Activated CD4-positive, alpha-beta T cell treated with anti-CD3 and anti-CD28 coated beads for 36 hours (primary cell): ENCODE measurements at regions of chr1 and their contacts with region 1.

Region 1: GRCh38 chr1:205227584-205228006 is at the start of gene TMCC2:
- DNase-seq: peak; percentile 92
- ATAC-seq: peak; percentile 81
- H3K4me3 Mint-ChIP-seq: peak within 1 kb of the TSS; percentile 89
- H3K27ac Mint-ChIP-seq: peak within 1 kb of the TSS; percentile 95
- H3K4me1 Mint-ChIP-seq: peaks cover 38% of the 10 kb centered on the region
- H3K27me3 Mint-ChIP-seq: peaks cover 14% of the 10 kb centered on the region
- total RNA-seq, gene TMCC2: 10.5 to 11.0 TPM

Region 2: GRCh38 chr1:205172729-205173366 is 54.7 kb before region 1 on chr1:
- CTCF ChIA-PET with region 1: no interaction called
- POLR2A ChIA-PET with region 1: no interaction called
- intact Hi-C with region 1: loop called in 1 of 2 experiments (anchors 1 kb)
- DNase-seq: peak; percentile 20
- ATAC-seq: peak; percentile 92
- H3K4me3 Mint-ChIP-seq: no peak overlapping the region
- H3K27ac Mint-ChIP-seq: peak overlapping the region; percentile 61
- H3K4me1 Mint-ChIP-seq: peaks cover 31% of the 10 kb centered on the region
- H3K27me3 Mint-ChIP-seq: no peaks in the 10 kb centered on the region

Region 3: DNA sequence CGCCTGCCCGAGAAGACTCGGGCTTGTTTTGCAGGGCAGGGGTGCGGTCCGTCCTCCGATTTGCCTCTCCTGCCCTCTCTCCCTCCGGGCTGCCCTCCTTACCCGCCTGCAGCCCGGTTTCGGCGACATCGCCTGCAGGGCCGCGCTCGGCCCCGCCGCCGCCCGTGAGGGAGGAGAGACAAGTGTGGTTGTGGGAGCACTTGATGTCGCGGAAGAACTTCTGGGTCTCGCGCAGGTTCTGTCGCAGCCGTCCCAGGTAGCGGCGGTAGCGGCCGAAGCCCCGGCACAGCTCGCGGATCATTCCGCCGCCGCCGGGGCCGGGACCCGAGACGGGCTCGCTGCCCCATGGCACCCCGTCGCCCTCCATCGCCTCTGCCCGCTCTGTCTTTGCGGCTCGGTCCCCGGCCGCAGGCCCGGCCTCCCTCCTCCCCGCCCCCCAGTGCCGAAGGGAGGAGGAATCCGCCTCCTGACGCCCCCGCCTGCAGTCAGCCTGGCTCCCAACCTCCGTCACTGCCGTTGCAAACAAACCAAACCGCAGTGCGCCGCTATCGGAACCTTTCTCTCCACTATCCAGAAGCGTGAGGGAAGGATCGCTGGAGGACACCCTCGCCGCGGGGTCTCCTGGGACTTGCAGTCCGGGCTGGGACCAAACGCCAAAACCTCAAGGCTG is 16.3 kb before region 1 on chr1 and contains the start of gene DSTYK:
- CTCF ChIA-PET with region 1: interaction called, 11 read pairs
- POLR2A ChIA-PET with region 1: interaction called, 11 read pairs
- intact Hi-C with region 1: loop called (anchors 1 to 2 kb)
- DNase-seq: peak; percentile 97
- ATAC-seq: peak; percentile 90
- H3K4me3 Mint-ChIP-seq: peak within 1 kb of the TSS; percentile 97
- H3K27ac Mint-ChIP-seq: peak within 1 kb of the TSS; percentile 95
- H3K4me1 Mint-ChIP-seq: peaks cover 54% of the 10 kb centered on the region
- H3K27me3 Mint-ChIP-seq: no peaks in the 10 kb centered on the region
- total RNA-seq, gene DSTYK: 9.4 to 12.3 TPM

Region 4: GRCh38 chr1:205248793-205249601 is 21.4 kb after region 1 on chr1:
- CTCF ChIA-PET with region 1: interaction called, 205 read pairs
- POLR2A ChIA-PET with region 1: interaction called, 6 read pairs
- intact Hi-C with region 1: loop called in 1 of 2 experiments (anchors 2 kb)
- DNase-seq: no peak
- ATAC-seq: no peak
- H3K4me3 Mint-ChIP-seq: no peak overlapping the region
- H3K27ac Mint-ChIP-seq: peak overlapping the region; percentile 30
- H3K4me1 Mint-ChIP-seq: peaks cover 5% of the 10 kb centered on the region
- H3K27me3 Mint-ChIP-seq: peaks cover 2% of the 10 kb centered on the region

Region 5: GRCh38 chr1:205273551-205273982 is 46.0 kb after region 1 on chr1:
- CTCF ChIA-PET with region 1: interaction called, 14 read pairs
- POLR2A ChIA-PET with region 1: no interaction called
- intact Hi-C with region 1: no loop called
- DNase-seq: peak; percentile 92
- ATAC-seq: peak; percentile 90
- H3K4me3 Mint-ChIP-seq: no peak overlapping the region
- H3K27ac Mint-ChIP-seq: no peak overlapping the region
- H3K4me1 Mint-ChIP-seq: peaks cover 35% of the 10 kb centered on the region
- H3K27me3 Mint-ChIP-seq: no peaks in the 10 kb centered on the region

Region 6: GRCh38 chr1:205321164-205321958 is 93.8 kb after region 1 on chr1 and contains the start of gene NUAK2:
- CTCF ChIA-PET with region 1: interaction called, 18 read pairs
- POLR2A ChIA-PET with region 1: no interaction called
- intact Hi-C with region 1: loop called in 1 of 2 experiments (anchors 1 kb)
- DNase-seq: peak; percentile 90
- ATAC-seq: peak; percentile 85
- H3K4me3 Mint-ChIP-seq: peak within 1 kb of the TSS; percentile 88
- H3K27ac Mint-ChIP-seq: peak within 1 kb of the TSS; percentile 90
- H3K4me1 Mint-ChIP-seq: peaks cover 65% of the 10 kb centered on the region
- H3K27me3 Mint-ChIP-seq: no peaks in the 10 kb centered on the region
- total RNA-seq, gene NUAK2: 2.3 to 2.7 TPM

Region 7: DNA sequence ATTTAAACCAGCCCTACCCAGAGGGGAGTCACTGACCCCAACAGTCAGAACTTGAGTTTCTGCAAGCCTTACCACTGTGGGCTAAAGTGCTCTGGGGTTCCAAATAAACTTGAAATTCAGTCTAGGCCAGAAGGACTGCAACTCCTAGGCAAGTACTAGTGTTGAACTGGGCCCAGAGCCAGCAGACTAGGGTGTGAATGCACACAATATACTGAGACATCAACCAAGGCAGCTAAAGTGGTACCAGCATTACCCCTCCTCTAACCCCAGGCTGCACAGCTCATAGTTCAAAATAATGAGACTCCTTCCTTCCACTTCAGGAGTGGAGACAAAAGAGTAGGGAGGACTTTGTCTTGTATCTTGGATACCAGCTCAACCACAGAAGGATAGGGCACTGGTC is 1618.9 kb after region 1 on chr1:
- CTCF ChIA-PET with region 1: no interaction called
- POLR2A ChIA-PET with region 1: no interaction called
- intact Hi-C with region 1: no loop called
- DNase-seq: no peak
- ATAC-seq: no peak
- H3K4me3 Mint-ChIP-seq: no peak overlapping the region
- H3K27ac Mint-ChIP-seq: no peak overlapping the region
- H3K4me1 Mint-ChIP-seq: no peaks in the 10 kb centered on the region
- H3K27me3 Mint-ChIP-seq: no peaks in the 10 kb centered on the region